ENCODE measurements at regions of chr15 and their contacts with region 1.

Region 1: DNA sequence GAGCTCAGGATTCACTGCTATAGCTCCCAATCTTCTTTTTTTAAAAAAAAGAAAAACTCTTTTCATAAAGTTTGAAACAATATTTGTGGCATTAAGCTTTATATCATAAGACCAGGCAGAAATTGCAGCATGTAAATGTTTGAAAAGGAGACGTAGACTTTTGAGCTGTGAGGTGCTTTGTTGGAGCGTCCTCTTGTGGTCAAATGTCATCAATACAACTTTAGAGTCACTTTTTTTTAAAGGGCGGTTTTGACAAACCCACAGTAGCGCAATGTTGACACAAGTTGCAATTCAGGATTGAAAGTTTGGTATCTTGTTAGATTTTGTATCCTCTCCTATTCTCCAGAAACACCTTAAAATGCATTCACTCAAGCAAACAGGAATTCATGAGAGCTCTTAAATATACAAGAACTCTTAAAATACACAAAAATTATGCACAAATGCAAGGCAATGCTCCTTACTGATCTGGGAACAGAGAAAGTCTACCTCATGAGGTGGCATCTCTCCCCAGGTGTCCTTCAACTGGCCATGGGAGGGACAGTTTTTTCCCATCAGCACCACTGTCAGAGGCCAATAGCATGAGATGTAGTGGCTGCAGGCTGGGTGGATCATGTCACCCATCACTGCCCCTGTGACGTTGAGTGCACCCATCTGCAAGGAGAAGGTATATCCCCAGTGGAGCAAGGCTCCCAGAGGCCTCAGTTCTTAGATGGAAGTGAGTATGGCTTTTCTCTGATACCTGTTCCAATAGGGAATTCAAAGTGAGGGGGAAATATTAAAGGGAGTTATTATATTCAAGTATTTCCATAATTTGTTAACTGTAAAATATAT is 70.7 kb downstream of the ANXA2 start:
- DNase-seq: peak in 1 of 2 donors; percentile 15
- ATAC-seq: no peak
- H3K4me3 ChIP-seq: no peak overlapping the region
- H3K27ac ChIP-seq: no peak overlapping the region
- H3K4me1 ChIP-seq: peaks cover 0 to 5% (median 0%) of the 10 kb centered on the region in 9 donors
- H3K27me3 ChIP-seq: peaks cover 0 to 73% (median 35%) of the 10 kb centered on the region in 7 donors
- CTCF ChIP-seq: peak; percentile 59 to 90 (median 81)

Region 2: GRCh38 chr15:59688841-59689625 is 638.0 kb before region 1 on chr15 and contains the start of gene BNIP2:
- intact Hi-C with region 1: loop called in 4 of 10 experiments (anchors 10 kb)
- DNase-seq: peak; percentile 99 to 100
- ATAC-seq: peak; percentile 97 to 98 (median 98)
- H3K4me3 ChIP-seq: peak within 1 kb of the TSS; percentile 72 to 99 (median 90)
- H3K27ac ChIP-seq: peak within 1 kb of the TSS; percentile 95 to 99 (median 98)
- H3K4me1 ChIP-seq: peaks cover 0 to 56% (median 38%) of the 10 kb centered on the region in 9 donors
- H3K27me3 ChIP-seq: no peaks in the 10 kb centered on the region
- CTCF ChIP-seq: peak in 3 of 9 donors; percentile 10 to 18 (median 15)
- total RNA-seq, gene BNIP2: 65.2 to 96.6 (median 80.2) TPM

Region 3: GRCh38 chr15:59725172-59725486 is 601.9 kb before region 1 on chr15:
- intact Hi-C with region 1: loop called in 9 of 10 experiments (anchors 2 to 10 kb)
- DNase-seq: no peak
- ATAC-seq: no peak
- H3K4me3 ChIP-seq: no peak overlapping the region
- H3K27ac ChIP-seq: no peak overlapping the region
- H3K4me1 ChIP-seq: no peaks in the 10 kb centered on the region
- H3K27me3 ChIP-seq: peaks cover 0 to 31% (median 15%) of the 10 kb centered on the region in 7 donors
- CTCF ChIP-seq: no peak

Region 4: DNA sequence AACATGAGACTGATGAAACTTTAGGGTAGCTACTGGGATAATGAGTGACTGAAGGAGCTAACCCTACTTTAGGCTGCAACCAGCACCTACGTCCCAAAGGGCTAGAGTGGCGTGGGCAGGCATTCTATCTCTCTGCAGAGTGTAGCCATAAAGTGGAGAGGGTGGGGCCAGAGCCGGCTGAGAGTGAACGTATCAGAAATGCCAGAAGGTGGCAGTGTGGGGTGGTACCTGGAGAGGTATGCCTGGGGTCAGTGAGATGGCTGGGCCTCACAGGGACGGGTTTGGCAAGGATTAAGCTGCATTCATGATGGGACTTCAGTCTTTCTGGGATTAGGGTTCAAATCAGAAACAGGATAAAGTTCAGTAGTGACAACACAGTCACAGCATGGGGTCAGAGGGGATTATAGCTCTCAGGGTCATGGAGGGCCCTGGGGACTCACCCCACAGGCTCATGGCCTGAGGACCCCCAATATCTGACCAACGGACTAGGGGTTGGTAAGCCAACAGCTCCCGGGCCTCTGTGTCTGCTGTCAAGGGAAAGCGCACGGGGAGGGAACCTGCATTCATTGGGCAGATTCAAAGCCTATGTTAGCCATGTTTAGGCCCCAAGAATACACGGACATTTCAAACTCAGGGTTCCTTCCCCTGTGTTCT is 409.4 kb before region 1 on chr15:
- intact Hi-C with region 1: loop called in 2 of 10 experiments (anchors 10 kb)
- DNase-seq: peak; percentile 10 to 16
- ATAC-seq: peak in 3 of 8 donors; percentile 49 to 75 (median 59)
- H3K4me3 ChIP-seq: no peak overlapping the region
- H3K27ac ChIP-seq: no peak overlapping the region
- H3K4me1 ChIP-seq: no peaks in the 10 kb centered on the region
- H3K27me3 ChIP-seq: peaks cover 0 to 67% (median 48%) of the 10 kb centered on the region in 7 donors
- CTCF ChIP-seq: peak in 6 of 9 donors; percentile 16 to 53 (median 29)